IMR-90 (cell line): ENCODE measurements at regions of chr20 and their contacts with region 1.

Region 1: GRCh38 chr20:58407966-58408557 is 19.0 kb downstream of the VAPB start:
- DNase-seq: no peak
- ATAC-seq: no peak
- H3K4me3 ChIP-seq: no peak overlapping the region
- H3K27ac ChIP-seq: no peak overlapping the region
- H3K4me1 ChIP-seq: peaks cover 5% of the 10 kb centered on the region; the same call in 1 of the 2 replicates
- H3K27me3 ChIP-seq: no peaks in the 10 kb centered on the region
- CTCF ChIP-seq: no peak
- POLR2A ChIP-seq: no peak
- RAD21 ChIP-seq: no peak

Region 2: DNA sequence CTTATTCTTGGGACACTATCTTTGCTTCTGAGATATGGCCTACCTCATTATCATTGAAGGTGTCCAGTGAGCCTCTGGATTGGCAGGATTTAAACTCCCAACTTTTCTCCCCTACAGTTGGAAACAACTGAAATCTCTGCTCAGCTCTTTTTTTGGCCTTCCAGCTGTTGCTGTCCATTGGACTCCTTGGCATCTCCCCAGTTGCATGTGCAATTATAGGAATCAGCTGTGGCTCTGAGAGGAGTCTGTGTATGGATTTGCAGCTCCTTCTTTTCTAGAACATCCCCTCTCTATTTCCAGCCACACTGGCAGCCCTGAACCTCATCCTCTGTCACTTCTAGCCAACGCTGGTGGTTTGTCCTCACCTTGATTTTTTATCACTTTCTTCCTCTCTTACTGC is 77.4 kb before region 1 on chr20:
- CTCF ChIA-PET with region 1: no interaction called
- POLR2A ChIA-PET with region 1: no interaction called
- dilution Hi-C with region 1: no loop called
- in situ Hi-C with region 1: no loop called
- intact Hi-C with region 1: no loop called
- DNase-seq: peak; percentile 28
- ATAC-seq: peak; percentile 60
- H3K4me3 ChIP-seq: no peak overlapping the region
- H3K27ac ChIP-seq: no peak overlapping the region
- H3K4me1 ChIP-seq: peaks cover 5% of the 10 kb centered on the region; the same call in 1 of the 2 replicates
- H3K27me3 ChIP-seq: no peaks in the 10 kb centered on the region
- CTCF ChIP-seq: no peak
- POLR2A ChIP-seq: no peak
- RAD21 ChIP-seq: no peak

Region 3: DNA sequence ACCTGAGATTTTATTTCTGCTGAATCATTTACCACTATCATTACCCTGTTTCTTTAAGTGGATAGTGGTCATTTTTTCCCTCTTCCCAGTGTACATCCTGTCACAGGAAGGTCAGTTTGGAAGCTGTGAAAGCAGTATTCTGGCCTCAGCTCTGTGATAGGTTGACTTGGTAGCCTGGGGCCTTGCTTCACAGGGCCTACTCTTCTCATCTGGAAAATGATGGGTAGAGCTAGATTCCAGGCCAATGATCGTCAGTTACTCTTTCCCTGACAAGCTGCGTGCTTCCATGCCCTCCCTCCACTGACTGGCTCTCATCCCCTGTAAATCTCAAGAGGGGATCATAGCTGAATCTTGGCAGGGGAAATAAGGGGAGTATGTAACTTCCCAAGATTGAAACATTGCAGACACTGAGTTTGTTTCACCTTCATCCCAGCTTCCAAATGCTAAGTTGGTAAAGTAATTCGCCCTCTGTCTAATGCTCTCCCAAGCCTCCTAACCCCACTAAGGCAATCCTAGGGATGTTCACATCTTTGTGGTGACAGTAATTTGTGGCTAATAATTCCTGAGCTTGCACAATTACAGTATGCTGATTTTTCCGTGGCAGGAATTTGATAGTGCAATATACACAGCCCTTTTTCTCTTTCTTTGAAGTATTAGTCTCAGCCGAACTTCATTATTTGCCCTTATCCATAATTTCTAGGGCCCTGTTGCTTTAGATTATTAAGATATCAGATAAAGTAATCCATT is 32.1 kb after region 1 on chr20:
- CTCF ChIA-PET with region 1: interaction called, 4 read pairs
- POLR2A ChIA-PET with region 1: no interaction called
- dilution Hi-C with region 1: no loop called
- in situ Hi-C with region 1: no loop called
- intact Hi-C with region 1: loop called (anchors 5 kb)
- DNase-seq: no peak
- ATAC-seq: no peak
- H3K4me3 ChIP-seq: no peak overlapping the region
- H3K27ac ChIP-seq: no peak overlapping the region
- H3K4me1 ChIP-seq: 0 out of 2 replicates have a peak, but pooled peaks cover 1% of the 10 kb centered on the region
- H3K27me3 ChIP-seq: no peaks in the 10 kb centered on the region
- CTCF ChIP-seq: no peak
- POLR2A ChIP-seq: no peak
- RAD21 ChIP-seq: no peak